Gastrocnemius medialis (tissue), 4 donors: ENCODE measurements at regions of chr9 and their contacts with region 1.

Region 1: GRCh38 chr9:91422758-91423711 is 597 bp downstream of the NFIL3 start:
- DNase-seq: peak; percentile 68 to 81
- ATAC-seq: peak; percentile 26 to 32
- H3K4me3 ChIP-seq: peak overlapping the region; percentile 76 to 94 (median 83)
- H3K27ac ChIP-seq: peak overlapping the region; percentile 94 to 99 (median 96)
- H3K4me1 ChIP-seq: peaks cover 7 to 30% of the 10 kb centered on the region in 2 donors
- H3K27me3 ChIP-seq: no peaks in the 10 kb centered on the region
- CTCF ChIP-seq: peak in 3 of 5 experiments; percentile 19 to 41 (median 36)
- POLR2A ChIP-seq: peak; percentile 63 to 66

Region 2: DNA sequence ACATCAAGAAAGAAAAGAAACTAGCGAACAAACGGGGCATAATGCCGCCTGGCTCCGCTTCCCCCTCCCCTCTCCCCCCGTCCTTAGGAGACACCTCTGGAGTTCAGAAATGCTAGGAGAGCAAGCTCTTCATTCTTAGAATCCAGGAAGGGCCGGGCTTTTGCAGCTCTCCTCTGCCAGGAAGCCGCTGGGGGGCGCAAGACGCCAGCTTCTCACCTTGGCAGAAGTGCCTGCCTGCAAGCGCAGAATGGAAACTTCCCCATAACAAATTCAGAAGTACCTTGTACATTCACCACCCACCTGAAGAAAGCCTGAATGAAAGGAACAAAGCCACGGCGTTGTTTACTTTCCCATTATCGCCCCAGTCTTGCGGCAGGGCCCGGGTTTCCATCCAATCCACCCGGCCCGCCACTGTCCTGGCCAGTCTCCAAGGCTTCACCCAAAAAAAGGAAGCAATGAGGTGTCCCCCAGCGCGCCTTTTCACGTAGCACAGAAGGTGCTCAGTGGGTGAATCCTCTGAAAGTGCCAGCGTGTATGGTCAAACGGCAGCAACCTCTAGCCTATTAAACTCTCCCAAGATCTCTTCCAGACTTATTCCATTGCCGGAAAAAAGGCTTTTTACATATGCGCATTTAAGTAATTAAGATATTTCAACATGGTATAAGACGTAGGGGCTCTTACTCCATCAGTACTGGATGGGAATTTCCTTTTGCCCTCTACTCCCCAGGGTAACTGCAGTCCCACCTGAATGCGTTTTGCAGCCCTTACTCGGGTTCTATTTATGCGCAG is 1819.9 kb before region 1 on chr9:
- in situ Hi-C with region 1: no loop called
- intact Hi-C with region 1: loop called (anchors 2 kb)
- DNase-seq: peak; percentile 82 to 89
- ATAC-seq: peak; percentile 35 to 45
- H3K4me3 ChIP-seq: peak overlapping the region; percentile 73 to 84 (median 78)
- H3K27ac ChIP-seq: peak overlapping the region; percentile 92 to 94 (median 94)
- H3K4me1 ChIP-seq: peaks cover 11 to 19% of the 10 kb centered on the region in 2 donors
- H3K27me3 ChIP-seq: no peaks in the 10 kb centered on the region
- CTCF ChIP-seq: peak; percentile 86 to 92 (median 89)
- POLR2A ChIP-seq: no peak

Region 3: GRCh38 chr9:90914868-90915483 is 508.1 kb before region 1 on chr9:
- in situ Hi-C with region 1: loop called in 3 of 4 experiments (anchors 5 kb)
- intact Hi-C with region 1: no loop called
- DNase-seq: peak; percentile 64 to 70
- ATAC-seq: peak; percentile 63 to 72
- H3K4me3 ChIP-seq: no peak overlapping the region
- H3K27ac ChIP-seq: peak overlapping the region in 1 of 4 donors; percentile 19
- H3K4me1 ChIP-seq: peaks cover 7 to 8% of the 10 kb centered on the region in 2 donors
- H3K27me3 ChIP-seq: no peaks in the 10 kb centered on the region
- CTCF ChIP-seq: peak; percentile 86 to 96 (median 93)
- POLR2A ChIP-seq: no peak

Region 4: DNA sequence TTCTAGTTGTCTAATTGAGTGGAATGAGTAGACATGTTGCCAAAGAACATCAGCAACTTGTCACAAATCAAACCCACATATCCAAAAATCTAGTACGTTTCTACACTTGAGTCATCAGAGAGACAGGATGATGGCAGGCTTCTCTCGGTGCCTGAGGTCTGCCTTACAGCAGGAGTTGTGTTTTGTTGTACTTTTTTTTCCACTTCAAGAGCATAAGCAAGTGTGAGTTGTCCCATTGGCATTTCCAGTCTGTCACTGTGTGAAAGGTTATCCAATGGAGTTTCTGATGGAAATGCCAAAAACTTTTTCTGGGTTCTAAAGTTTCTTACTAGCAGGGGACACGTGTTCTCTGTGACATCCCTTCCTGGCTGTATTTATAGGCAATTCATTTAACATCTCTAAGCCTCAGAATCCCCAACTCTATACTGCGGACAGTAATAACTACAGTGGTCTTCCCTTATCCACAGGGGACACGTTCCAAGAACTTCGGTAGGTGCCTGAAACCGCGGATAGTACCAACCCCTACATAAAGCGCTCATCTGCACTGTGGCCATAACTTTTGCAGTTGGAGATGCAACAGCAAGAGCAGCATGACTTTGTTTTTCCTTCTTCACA is 374.9 kb before region 1 on chr9:
- in situ Hi-C with region 1: loop called (anchors 5 to 25 kb)
- intact Hi-C with region 1: no loop called
- DNase-seq: no peak
- ATAC-seq: peak; percentile 31 to 55
- H3K4me3 ChIP-seq: no peak overlapping the region
- H3K27ac ChIP-seq: peak overlapping the region in 3 of 4 donors; percentile 23 to 48 (median 37)
- H3K4me1 ChIP-seq: peaks cover 6 to 8% of the 10 kb centered on the region in 2 donors
- H3K27me3 ChIP-seq: no peaks in the 10 kb centered on the region
- CTCF ChIP-seq: no peak
- POLR2A ChIP-seq: peak in 1 of 2 donors; percentile 1

Region 5: GRCh38 chr9:91089405-91090129 is 333.5 kb before region 1 on chr9:
- in situ Hi-C with region 1: loop called in 1 of 4 experiments (anchors 10 kb)
- intact Hi-C with region 1: no loop called
- DNase-seq: no peak
- ATAC-seq: peak; percentile 34 to 73
- H3K4me3 ChIP-seq: no peak overlapping the region
- H3K27ac ChIP-seq: peak overlapping the region in 1 of 4 donors; percentile 11
- H3K4me1 ChIP-seq: peaks cover 4% of the 10 kb centered on the region in 2 donors
- H3K27me3 ChIP-seq: no peaks in the 10 kb centered on the region
- CTCF ChIP-seq: peak in 2 of 5 experiments; percentile 34 to 52
- POLR2A ChIP-seq: no peak

Region 6: DNA sequence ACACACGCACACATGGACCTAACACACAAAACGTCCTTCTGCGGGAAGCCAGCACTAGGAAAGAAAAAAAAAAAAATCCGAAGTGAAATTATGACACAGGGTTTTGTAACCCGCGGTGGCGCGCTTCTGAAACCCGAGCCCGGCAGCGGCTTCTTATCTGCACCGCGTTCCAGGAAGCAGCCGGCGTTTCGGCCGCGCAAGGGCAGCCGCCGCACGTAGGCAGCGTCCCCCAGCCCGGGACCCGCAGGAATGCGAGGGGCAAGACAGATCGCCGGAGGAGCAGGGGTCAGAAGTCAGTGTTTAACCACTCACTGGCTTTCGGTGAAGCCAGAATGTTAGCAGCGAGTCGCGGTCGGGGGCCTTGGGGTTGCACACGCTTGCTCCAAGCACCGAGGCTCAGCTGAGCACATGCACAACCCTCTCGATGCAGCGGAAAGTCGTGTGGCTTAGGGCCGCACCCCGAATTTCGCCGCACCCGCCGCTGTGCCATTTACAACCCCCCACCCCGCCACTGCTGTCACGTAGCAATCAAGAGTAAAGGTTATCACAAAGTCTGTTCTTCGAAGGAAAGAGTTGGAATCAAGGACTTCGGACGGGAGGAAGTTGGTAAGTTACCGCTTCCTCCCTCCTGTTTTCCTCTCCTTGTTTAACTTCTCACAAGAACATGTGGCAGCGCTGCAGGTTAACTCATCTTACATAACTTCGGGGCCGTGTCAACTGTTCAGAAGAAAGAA is 229.2 kb before region 1 on chr9:
- in situ Hi-C with region 1: loop called in 3 of 4 experiments (anchors 5 to 10 kb)
- intact Hi-C with region 1: loop called (anchors 1 kb)
- DNase-seq: peak; percentile 83 to 91
- ATAC-seq: peak; percentile 54 to 55
- H3K4me3 ChIP-seq: peak overlapping the region; percentile 58 to 67 (median 62)
- H3K27ac ChIP-seq: peak overlapping the region; percentile 97 to 100 (median 99)
- H3K4me1 ChIP-seq: peaks cover 51 to 67% of the 10 kb centered on the region in 2 donors
- H3K27me3 ChIP-seq: no peaks in the 10 kb centered on the region
- CTCF ChIP-seq: no peak
- POLR2A ChIP-seq: peak; percentile 89 to 91

Region 7: DNA sequence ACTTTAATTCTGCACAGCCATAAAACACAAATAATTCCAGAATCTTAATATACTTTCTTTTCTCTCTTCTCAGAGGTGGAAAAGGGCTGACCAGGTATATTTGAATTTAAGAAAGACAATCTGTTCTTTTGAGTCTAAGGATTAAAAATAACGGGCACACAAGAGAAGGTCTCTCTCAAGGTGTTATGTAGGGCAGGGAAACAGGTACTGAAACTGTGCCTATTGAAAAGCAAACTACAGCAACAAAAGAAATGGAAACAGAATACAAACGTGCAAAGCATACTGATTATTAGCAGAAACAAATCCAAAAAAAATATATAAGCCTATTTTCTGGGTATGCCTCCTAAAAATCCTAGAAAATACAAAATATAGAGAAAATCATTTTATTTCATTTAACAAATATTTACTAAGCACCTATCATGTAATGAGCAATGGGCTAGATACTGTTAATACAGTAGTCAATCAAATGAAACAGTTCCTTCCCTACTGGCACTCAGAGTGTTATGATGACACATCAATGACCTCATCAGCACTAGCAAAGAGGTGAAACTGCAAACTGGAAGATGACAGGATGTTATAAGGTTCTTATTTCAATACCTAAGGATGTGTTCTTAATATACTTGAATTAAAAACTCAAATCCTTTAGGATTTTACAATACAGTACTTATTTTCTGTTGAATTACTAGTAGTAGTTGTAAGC is 149.0 kb before region 1 on chr9:
- in situ Hi-C with region 1: no loop called
- intact Hi-C with region 1: no loop called
- DNase-seq: no peak
- ATAC-seq: peak in 1 of 2 donors; percentile 51
- H3K4me3 ChIP-seq: no peak overlapping the region
- H3K27ac ChIP-seq: no peak overlapping the region
- H3K4me1 ChIP-seq: peaks cover 18 to 22% of the 10 kb centered on the region in 2 donors
- H3K27me3 ChIP-seq: no peaks in the 10 kb centered on the region
- CTCF ChIP-seq: no peak
- POLR2A ChIP-seq: no peak

Region 8: GRCh38 chr9:91361291-91362050 is 61.6 kb before region 1 on chr9 and contains the start of gene AUH:
- in situ Hi-C with region 1: loop called in 2 of 4 experiments (anchors 10 kb)
- intact Hi-C with region 1: loop called (anchors 2 kb)
- DNase-seq: peak; percentile 69 to 81
- ATAC-seq: peak; percentile 93 to 94
- H3K4me3 ChIP-seq: peak within 1 kb of the TSS; percentile 76 to 97 (median 94)
- H3K27ac ChIP-seq: peak within 1 kb of the TSS; percentile 90 to 96 (median 93)
- H3K4me1 ChIP-seq: peaks cover 29 to 43% of the 10 kb centered on the region in 2 donors
- H3K27me3 ChIP-seq: no peaks in the 10 kb centered on the region
- CTCF ChIP-seq: peak in 1 of 5 experiments; percentile 29
- POLR2A ChIP-seq: peak; percentile 61 to 89
- total RNA-seq, gene AUH: 17.1 to 28.2 (median 20.8) TPM

Region 9: GRCh38 chr9:91711755-91712601 is 288.9 kb after region 1 on chr9:
- in situ Hi-C with region 1: no loop called
- intact Hi-C with region 1: no loop called
- DNase-seq: no peak
- ATAC-seq: no peak
- H3K4me3 ChIP-seq: no peak overlapping the region
- H3K27ac ChIP-seq: no peak overlapping the region
- H3K4me1 ChIP-seq: no peaks in the 10 kb centered on the region
- H3K27me3 ChIP-seq: peaks cover 15 to 27% (median 23%) of the 10 kb centered on the region in 3 donors
- CTCF ChIP-seq: no peak
- POLR2A ChIP-seq: no peak

Region 10: DNA sequence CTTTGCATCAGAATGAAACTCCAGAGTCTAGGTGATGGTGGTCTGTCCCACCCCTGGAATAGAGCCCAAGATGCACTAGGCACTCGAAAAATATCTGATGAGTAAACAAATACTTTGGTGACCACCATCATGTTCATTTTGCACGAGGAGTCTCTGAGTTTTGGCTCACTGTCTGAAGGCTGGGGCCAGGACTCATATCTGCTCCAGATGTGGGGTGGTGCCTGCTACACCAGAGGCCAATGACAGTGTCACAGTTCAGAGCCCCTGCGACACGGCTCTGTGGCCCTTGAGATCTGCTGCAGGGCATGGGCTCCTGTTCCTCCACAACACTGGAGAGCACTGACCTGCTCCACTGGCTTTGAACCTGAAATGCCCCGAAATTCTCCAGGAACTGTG is 362.4 kb after region 1 on chr9:
- in situ Hi-C with region 1: no loop called
- intact Hi-C with region 1: no loop called
- DNase-seq: no peak
- ATAC-seq: no peak
- H3K4me3 ChIP-seq: no peak overlapping the region
- H3K27ac ChIP-seq: no peak overlapping the region
- H3K4me1 ChIP-seq: no peaks in the 10 kb centered on the region
- H3K27me3 ChIP-seq: no peaks in the 10 kb centered on the region
- CTCF ChIP-seq: no peak
- POLR2A ChIP-seq: no peak